ENCODE measurements at regions of chr17 and their contacts with region 1.

Region 1: GRCh38 chr17:39153599-39154051 is 2.2 kb upstream of the PLXDC1 start:
- DNase-seq: peak; percentile 95
- ATAC-seq: peak; percentile 58
- H3K4me3 Mint-ChIP-seq: peak overlapping the region; percentile 82
- H3K27ac Mint-ChIP-seq: peak overlapping the region; percentile 87
- H3K4me1 Mint-ChIP-seq: peaks cover 30% of the 10 kb centered on the region
- H3K27me3 Mint-ChIP-seq: peaks cover 25% of the 10 kb centered on the region

Region 2: GRCh38 chr17:38853292-38854219 is 300.1 kb before region 1 on chr17 and contains the start of gene RPL23:
- CTCF ChIA-PET with region 1: interaction called, 10 read pairs
- DNase-seq: peak; percentile 96
- ATAC-seq: peak; percentile 88
- H3K4me3 Mint-ChIP-seq: peak within 1 kb of the TSS; percentile 97
- H3K27ac Mint-ChIP-seq: peak within 1 kb of the TSS; percentile 98
- H3K4me1 Mint-ChIP-seq: peaks cover 42% of the 10 kb centered on the region
- H3K27me3 Mint-ChIP-seq: no peaks in the 10 kb centered on the region
- total RNA-seq, gene RPL23: 831 to 1,130 TPM

Region 3: GRCh38 chr17:38967290-38967738 is 186.3 kb before region 1 on chr17 and contains the start of gene FBXO47:
- CTCF ChIA-PET with region 1: interaction called, 13 read pairs
- DNase-seq: peak; percentile 93
- ATAC-seq: peak; percentile 100
- H3K4me3 Mint-ChIP-seq: peak within 1 kb of the TSS; percentile 68
- H3K27ac Mint-ChIP-seq: peak within 1 kb of the TSS; percentile 73
- H3K4me1 Mint-ChIP-seq: peaks cover 10% of the 10 kb centered on the region
- H3K27me3 Mint-ChIP-seq: peaks cover 2% of the 10 kb centered on the region
- total RNA-seq, gene FBXO47: 0.18 TPM in 1 of 2 experiments, not detected in the other

Region 4: DNA sequence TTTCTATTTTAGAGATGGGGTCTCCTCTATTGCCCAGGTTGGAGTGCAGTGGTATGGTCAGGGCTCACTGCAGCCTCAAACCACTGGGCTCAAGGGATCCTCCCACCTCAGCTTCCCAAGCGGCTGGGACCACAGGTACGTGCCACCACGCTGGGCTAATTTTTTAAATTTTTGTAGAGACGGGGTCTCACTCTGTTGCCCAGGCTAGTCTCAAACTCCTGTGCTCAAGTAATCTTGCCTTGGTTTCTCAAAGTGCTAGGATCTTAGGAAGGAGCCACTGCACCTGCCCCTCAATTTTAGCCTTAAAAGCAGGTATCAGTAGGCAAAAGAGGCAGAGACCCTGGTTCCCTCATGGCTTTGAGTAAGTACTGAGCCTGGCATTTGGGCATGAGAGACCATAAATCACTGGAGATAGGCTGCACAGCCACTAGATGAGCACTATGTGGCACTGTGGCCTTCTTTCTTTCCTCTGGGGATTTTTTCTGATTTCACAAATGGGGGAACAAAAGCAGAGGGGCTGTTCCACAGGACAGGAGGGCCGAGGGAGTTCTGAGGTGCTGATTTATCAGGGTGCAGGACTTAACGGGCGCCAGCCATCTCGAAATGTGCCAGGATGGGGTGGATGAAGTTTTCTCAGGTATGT is 84.4 kb before region 1 on chr17:
- CTCF ChIA-PET with region 1: interaction called, 49 read pairs
- DNase-seq: peak; percentile 49
- ATAC-seq: peak; percentile 88
- H3K4me3 Mint-ChIP-seq: no peak overlapping the region
- H3K27ac Mint-ChIP-seq: no peak overlapping the region
- H3K4me1 Mint-ChIP-seq: peaks cover 19% of the 10 kb centered on the region
- H3K27me3 Mint-ChIP-seq: no peaks in the 10 kb centered on the region

Region 5: DNA sequence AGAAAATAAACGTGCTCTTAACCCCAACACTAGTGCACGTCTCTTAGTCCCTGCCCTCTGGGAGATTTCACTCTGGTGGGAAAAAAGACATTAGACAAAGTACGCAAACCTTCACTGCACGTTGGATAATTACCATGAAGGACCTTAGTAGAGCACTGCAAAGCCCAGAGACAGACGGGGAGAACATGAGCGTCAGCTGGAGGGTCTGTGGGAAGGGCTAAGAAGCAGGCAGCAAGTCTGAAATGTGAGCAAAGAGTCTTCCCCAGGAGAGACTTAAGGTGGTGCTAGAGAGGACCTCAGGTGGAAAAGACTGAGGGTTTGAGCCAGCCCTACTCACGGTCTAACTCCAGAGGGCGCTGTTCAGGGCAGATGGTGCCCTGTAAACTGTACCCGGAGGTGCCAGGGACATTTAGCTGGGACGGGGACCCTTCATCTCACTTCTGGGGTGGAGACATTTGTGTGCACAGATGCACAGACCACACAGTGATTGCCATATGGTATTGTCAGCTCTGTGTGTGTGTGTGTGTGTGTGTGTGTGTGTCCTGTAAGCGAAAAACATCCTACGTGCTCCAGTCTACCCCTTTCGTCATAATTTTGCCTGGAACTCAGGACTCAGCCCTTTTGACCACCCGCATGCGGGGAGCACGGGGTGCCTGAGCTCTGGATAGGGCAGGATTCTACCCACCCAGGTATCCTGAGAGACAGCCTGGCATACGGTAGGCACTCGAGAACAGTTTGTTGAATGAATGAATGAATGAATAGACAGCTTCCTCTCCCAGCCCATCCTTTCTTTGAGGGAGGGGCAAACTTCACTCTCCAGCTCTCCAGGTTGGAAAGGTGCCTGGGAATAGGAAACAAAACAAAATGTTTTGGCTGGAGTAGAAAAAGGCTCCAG is 82.2 kb after region 1 on chr17:
- CTCF ChIA-PET with region 1: interaction called, 18 read pairs
- DNase-seq: peak; percentile 75
- ATAC-seq: peak; percentile 72
- H3K4me3 Mint-ChIP-seq: no peak overlapping the region
- H3K27ac Mint-ChIP-seq: no peak overlapping the region
- H3K4me1 Mint-ChIP-seq: peaks cover 25% of the 10 kb centered on the region
- H3K27me3 Mint-ChIP-seq: peaks cover 12% of the 10 kb centered on the region

Measured in activated CD8-positive, alpha-beta memory T cell treated with anti-CD3 and anti-CD28 coated beads, Interleukin-2, amount 10 ng/mL, durations not matched to agents 7 days and 5 days (primary cell).